CD8-positive, alpha-beta T cell (primary cell): ENCODE measurements at regions of chr20 and their contacts with region 1.

Region 1: DNA sequence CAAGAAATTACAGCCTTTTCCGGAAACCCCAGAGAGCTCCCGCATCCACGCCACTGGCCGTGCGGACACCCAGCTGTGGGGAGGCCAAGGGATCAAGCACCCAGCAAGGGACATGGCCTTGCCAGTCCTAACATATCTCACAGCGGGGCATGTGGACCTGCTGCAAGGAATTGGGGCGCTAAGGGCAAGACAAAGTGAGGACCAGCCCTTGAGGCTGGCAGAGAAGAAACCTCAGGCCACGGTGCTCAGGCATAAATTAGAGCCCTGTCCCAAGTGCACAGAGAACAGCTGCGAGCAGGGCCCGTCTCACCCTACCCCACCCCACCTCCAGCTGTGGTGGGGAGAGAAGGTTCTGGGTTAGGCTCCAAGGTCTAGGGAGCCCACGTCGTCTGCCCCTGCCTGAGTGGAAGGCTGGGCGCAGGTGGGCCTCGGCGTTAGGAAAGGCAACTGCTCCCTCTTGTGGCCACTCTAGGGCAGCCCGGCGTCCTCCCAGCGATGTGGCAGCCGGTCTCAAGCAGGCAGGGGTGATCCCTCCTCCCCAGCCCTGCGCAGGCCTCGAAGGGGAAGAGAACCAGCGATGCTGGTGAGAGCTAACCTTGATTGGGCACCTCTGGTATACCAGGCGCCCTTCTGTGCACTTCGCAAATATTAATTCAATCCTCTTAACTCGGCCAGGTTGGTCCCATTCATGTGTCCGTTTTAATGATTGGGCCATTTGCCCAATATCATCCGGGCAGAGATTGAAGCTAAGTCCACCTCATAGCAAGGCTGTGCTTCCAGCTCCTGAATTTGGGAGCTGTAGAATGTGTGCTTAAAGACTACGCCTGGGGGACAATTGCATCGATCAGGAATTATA is 235.8 kb downstream of the NFATC2 start:
- DNase-seq: peak; percentile 47 to 82 (median 74)
- ATAC-seq: peak; percentile 90
- H3K4me3 ChIP-seq: no peak overlapping the region
- H3K4me3 Mint-ChIP-seq: no peak overlapping the region
- H3K27ac ChIP-seq: no peak overlapping the region
- H3K27ac Mint-ChIP-seq: no peak overlapping the region
- H3K4me1 ChIP-seq: no peaks in the 10 kb centered on the region
- H3K4me1 Mint-ChIP-seq: peaks cover 5% of the 10 kb centered on the region
- H3K27me3 ChIP-seq: peaks cover 0 to 2% of the 10 kb centered on the region in 2 experiments
- H3K27me3 Mint-ChIP-seq: peaks cover 12% of the 10 kb centered on the region
- CTCF ChIP-seq: peak; percentile 77

Region 2: GRCh38 chr20:50992733-50993457 is 313.8 kb before region 1 on chr20:
- CTCF ChIA-PET with region 1: interaction called, 184 read pairs
- POLR2A ChIA-PET with region 1: interaction called, 5 read pairs
- intact Hi-C with region 1: no loop called
- DNase-seq: peak in 4 of 9 experiments; percentile 22 to 63 (median 48)
- ATAC-seq: peak; percentile 85
- H3K4me3 ChIP-seq: no peak overlapping the region
- H3K4me3 Mint-ChIP-seq: no peak overlapping the region
- H3K27ac ChIP-seq: no peak overlapping the region
- H3K27ac Mint-ChIP-seq: no peak overlapping the region
- H3K4me1 ChIP-seq: no peaks in the 10 kb centered on the region
- H3K4me1 Mint-ChIP-seq: no peaks in the 10 kb centered on the region
- H3K27me3 ChIP-seq: peaks cover 2 to 3% of the 10 kb centered on the region in 2 experiments
- H3K27me3 Mint-ChIP-seq: peaks cover 13% of the 10 kb centered on the region
- CTCF ChIP-seq: peak; percentile 46

Region 3: DNA sequence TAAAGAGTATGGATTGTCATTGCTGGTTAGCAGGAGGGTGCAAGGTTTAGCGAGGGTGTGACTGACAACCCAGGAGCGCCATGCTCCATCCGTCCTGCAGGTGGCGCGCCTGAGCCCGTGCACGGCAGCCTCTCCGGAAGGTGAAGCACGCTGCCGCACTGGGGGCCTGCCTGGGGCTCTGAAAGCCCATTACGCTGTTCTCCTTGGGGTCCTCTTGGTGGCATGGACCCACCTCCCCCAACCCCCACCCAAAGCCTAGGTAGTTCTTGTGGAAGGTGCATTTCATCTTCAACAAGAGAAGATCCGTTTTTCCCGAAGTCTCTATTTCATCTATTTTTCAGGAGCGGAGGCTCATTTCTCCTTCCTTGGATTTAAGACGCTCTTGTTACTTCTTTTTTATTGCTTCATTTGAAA is 86.4 kb before region 1 on chr20:
- CTCF ChIA-PET with region 1: interaction called, 4 read pairs
- POLR2A ChIA-PET with region 1: no interaction called
- intact Hi-C with region 1: loop called (anchors 1 to 2 kb)
- DNase-seq: peak; percentile 21 to 67 (median 50)
- ATAC-seq: peak; percentile 54
- H3K4me3 ChIP-seq: no peak overlapping the region
- H3K4me3 Mint-ChIP-seq: no peak overlapping the region
- H3K27ac ChIP-seq: no peak overlapping the region
- H3K27ac Mint-ChIP-seq: no peak overlapping the region
- H3K4me1 ChIP-seq: no peaks in the 10 kb centered on the region
- H3K4me1 Mint-ChIP-seq: peaks cover 10% of the 10 kb centered on the region
- H3K27me3 ChIP-seq: peaks cover 0 to 4% of the 10 kb centered on the region in 2 experiments
- H3K27me3 Mint-ChIP-seq: peaks cover 57% of the 10 kb centered on the region
- CTCF ChIP-seq: peak; percentile 81

Region 4: DNA sequence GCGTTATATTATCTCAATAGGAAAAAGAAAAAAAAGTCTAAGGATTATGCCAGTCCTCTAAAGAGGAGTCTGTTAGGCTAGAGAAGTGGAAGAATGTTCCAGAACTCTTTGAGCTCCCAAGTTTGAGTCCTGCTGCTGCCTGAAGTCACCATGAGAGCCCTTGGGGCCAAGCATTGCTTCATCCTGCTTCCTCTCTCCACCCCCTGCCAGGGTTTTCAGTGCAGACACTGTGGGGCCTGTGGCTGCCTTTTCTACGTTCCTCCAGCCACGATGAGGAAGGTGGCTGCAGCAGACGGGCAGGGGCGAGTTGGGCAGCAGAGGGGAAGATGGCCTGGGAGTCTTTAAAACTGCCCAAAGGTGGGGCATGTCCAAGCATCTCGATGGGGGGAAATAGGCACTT is 69.5 kb before region 1 on chr20:
- CTCF ChIA-PET with region 1: no interaction called
- POLR2A ChIA-PET with region 1: no interaction called
- intact Hi-C with region 1: no loop called
- DNase-seq: no peak
- ATAC-seq: no peak
- H3K4me3 ChIP-seq: no peak overlapping the region
- H3K4me3 Mint-ChIP-seq: no peak overlapping the region
- H3K27ac ChIP-seq: no peak overlapping the region
- H3K27ac Mint-ChIP-seq: no peak overlapping the region
- H3K4me1 ChIP-seq: no peaks in the 10 kb centered on the region
- H3K4me1 Mint-ChIP-seq: no peaks in the 10 kb centered on the region
- H3K27me3 ChIP-seq: no peaks in the 10 kb centered on the region
- H3K27me3 Mint-ChIP-seq: peaks cover 25% of the 10 kb centered on the region
- CTCF ChIP-seq: no peak

Region 5: DNA sequence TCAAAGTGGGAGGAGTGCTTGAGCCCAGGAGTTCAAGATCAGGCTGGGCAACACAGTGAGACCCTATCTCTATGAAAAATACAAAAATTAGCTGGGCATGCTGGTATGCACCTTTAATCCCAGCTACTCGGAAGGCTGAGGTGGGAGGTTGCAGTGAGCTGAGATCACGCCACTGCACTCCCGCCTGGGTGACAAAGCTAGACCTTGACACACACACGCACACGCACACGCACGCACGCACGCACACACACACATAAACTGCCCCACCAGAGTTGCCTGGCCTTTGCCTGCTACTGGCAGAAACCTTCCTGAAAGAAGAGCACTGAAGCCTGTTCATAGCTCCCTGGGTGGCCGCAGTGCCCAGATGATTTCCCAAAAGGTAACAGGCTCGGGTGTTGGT is 11.2 kb before region 1 on chr20:
- CTCF ChIA-PET with region 1: interaction called, 11 read pairs
- POLR2A ChIA-PET with region 1: no interaction called
- intact Hi-C with region 1: no loop called
- DNase-seq: no peak
- ATAC-seq: no peak
- H3K4me3 ChIP-seq: no peak overlapping the region
- H3K4me3 Mint-ChIP-seq: no peak overlapping the region
- H3K27ac ChIP-seq: no peak overlapping the region
- H3K27ac Mint-ChIP-seq: no peak overlapping the region
- H3K4me1 ChIP-seq: no peaks in the 10 kb centered on the region
- H3K4me1 Mint-ChIP-seq: no peaks in the 10 kb centered on the region
- H3K27me3 ChIP-seq: no peaks in the 10 kb centered on the region
- H3K27me3 Mint-ChIP-seq: peaks cover 20% of the 10 kb centered on the region
- CTCF ChIP-seq: no peak

Region 6: GRCh38 chr20:51326201-51326819 is 19.6 kb after region 1 on chr20:
- CTCF ChIA-PET with region 1: interaction called, 17 read pairs
- POLR2A ChIA-PET with region 1: no interaction called
- intact Hi-C with region 1: no loop called
- DNase-seq: peak in 6 of 9 experiments; percentile 9 to 69 (median 50)
- ATAC-seq: no peak
- H3K4me3 ChIP-seq: no peak overlapping the region
- H3K4me3 Mint-ChIP-seq: no peak overlapping the region
- H3K27ac ChIP-seq: no peak overlapping the region
- H3K27ac Mint-ChIP-seq: no peak overlapping the region
- H3K4me1 ChIP-seq: no peaks in the 10 kb centered on the region
- H3K4me1 Mint-ChIP-seq: no peaks in the 10 kb centered on the region
- H3K27me3 ChIP-seq: no peaks in the 10 kb centered on the region
- H3K27me3 Mint-ChIP-seq: peaks cover 11% of the 10 kb centered on the region
- CTCF ChIP-seq: no peak

Region 7: GRCh38 chr20:52172392-52173047 is 865.8 kb after region 1 on chr20:
- CTCF ChIA-PET with region 1: no interaction called
- POLR2A ChIA-PET with region 1: no interaction called
- intact Hi-C with region 1: no loop called
- DNase-seq: no peak
- ATAC-seq: no peak
- H3K4me3 ChIP-seq: no peak overlapping the region
- H3K4me3 Mint-ChIP-seq: no peak overlapping the region
- H3K27ac ChIP-seq: no peak overlapping the region
- H3K27ac Mint-ChIP-seq: no peak overlapping the region
- H3K4me1 ChIP-seq: no peaks in the 10 kb centered on the region
- H3K4me1 Mint-ChIP-seq: no peaks in the 10 kb centered on the region
- H3K27me3 ChIP-seq: no peaks in the 10 kb centered on the region
- H3K27me3 Mint-ChIP-seq: no peaks in the 10 kb centered on the region
- CTCF ChIP-seq: no peak